ENCODE measurements at regions of chr4 and their contacts with region 1.

Region 1: DNA sequence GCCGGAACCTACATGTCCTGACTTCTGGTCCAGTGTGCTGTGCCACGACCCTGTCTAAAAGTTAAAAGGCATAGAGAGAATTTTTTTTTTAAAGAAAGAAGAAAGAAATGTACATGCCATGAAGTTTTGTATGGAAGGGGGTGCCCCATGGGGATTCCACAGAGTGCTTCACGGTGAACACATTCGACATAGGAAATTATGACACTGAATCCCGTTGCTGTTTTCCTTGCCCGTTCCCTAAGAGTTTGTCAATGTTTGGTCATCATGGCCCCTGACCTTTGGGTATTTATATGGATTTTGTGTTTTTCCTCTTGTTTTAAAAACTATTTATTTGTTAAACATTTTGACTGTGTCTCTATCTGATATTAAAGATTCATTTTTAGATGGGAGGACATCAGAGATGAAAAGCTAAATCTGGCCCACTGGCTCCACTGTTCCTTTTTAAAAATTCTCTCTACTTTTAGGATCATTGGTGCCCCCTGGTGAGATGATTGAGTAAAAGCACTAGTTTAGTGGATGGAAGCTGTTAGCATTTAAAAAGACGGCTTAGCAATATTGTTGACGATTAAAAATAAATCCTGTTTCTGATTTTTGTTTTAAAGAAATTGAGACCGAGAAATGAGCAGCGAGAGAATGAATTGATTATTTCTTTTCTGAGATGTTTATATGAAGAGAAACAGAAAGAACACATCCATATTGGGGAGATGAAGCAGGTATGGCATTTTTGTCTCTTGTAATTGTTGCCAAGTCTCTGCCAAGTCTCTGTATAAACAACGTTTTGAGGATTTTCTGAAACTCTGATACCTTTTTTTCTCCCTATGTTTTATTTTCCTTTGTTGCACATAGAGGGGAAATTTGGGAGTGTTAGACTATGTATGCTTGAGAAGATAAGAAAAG is 75.0 kb downstream of the PTTG2 start:
- DNase-seq: peak; percentile 54
- ATAC-seq: no peak
- H3K4me3 Mint-ChIP-seq: no peak overlapping the region
- H3K27ac Mint-ChIP-seq: no peak overlapping the region
- H3K4me1 Mint-ChIP-seq: no peaks in the 10 kb centered on the region
- H3K27me3 Mint-ChIP-seq: no peaks in the 10 kb centered on the region

Region 2: DNA sequence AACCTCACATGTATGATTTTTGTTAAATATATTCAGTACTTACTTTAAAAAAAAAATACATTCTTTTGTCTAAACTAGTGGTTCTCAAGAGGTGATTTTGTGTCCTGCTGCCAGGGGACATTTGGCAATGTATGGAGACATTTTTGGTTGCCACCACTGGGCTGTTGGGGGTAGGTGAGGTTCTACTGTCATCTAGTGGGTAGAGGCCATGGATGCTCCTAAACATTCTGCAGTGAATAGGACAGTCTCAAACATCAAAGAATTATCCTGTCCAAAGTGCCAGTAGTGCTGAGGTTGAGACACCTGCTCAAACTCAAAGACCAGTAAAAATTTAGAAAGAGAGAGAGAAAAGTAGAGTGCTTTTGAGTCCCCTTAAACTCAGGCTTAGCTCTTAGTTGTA is 241.7 kb before region 1 on chr4:
- CTCF ChIA-PET with region 1: interaction called, 11 read pairs
- POLR2A ChIA-PET with region 1: no interaction called
- DNase-seq: peak; percentile 31
- ATAC-seq: no peak
- H3K4me3 Mint-ChIP-seq: no peak overlapping the region
- H3K27ac Mint-ChIP-seq: no peak overlapping the region
- H3K4me1 Mint-ChIP-seq: no peaks in the 10 kb centered on the region
- H3K27me3 Mint-ChIP-seq: peaks cover 10% of the 10 kb centered on the region

Region 3: DNA sequence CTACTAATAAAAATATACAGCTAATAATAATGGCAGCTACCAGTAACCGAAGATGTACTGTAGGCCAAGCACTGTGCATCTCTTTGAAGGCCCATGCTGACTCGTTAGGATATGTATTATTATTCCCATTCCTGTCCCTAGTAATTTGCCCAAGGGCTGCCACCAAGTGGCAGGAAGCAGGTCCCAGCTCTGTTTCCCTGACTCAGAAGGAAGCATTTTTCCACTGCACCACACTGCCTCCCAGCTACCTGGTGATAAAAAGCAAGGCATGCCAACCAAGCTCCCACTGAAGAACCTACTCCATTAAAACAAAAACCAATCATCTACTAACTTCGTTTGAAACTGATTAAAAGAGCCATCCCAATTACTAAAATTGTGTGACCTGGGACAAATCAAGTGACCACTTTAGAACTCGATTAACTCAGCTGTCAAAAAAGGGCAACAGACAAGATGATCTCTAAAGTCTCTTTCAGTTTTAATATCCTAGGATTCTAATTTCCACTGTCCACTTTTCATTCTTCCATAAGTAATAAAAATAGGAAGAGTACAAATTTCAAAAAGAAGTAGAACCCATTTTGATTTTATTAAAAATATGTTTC is 233.1 kb before region 1 on chr4:
- CTCF ChIA-PET with region 1: interaction called, 26 read pairs
- POLR2A ChIA-PET with region 1: no interaction called
- DNase-seq: no peak
- ATAC-seq: no peak
- H3K4me3 Mint-ChIP-seq: no peak overlapping the region
- H3K27ac Mint-ChIP-seq: no peak overlapping the region
- H3K4me1 Mint-ChIP-seq: no peaks in the 10 kb centered on the region
- H3K27me3 Mint-ChIP-seq: peaks cover 5% of the 10 kb centered on the region

Region 4: DNA sequence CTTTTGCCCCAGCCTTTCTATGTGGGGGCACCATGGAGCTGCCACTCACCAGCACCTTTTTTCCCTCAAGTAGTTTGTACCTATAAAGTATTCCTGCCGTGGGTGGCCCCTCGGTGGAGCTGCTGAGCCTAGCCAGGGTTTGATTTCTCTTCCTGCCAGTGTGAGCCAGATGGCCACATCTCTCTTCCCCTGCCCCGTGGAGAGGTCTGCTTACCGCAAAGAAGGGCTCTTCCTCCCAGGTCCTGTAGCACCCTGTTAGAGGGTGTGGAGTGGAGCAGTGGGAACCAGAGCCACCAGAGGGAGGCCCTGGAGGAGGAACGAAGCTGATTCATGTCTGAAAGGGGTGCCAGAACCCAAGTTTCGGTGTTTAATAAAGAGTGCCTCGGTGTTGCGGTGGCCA is 20.3 kb after region 1 on chr4:
- CTCF ChIA-PET with region 1: no interaction called
- POLR2A ChIA-PET with region 1: no interaction called
- DNase-seq: no peak
- ATAC-seq: no peak
- H3K4me3 Mint-ChIP-seq: no peak overlapping the region
- H3K27ac Mint-ChIP-seq: no peak overlapping the region
- H3K4me1 Mint-ChIP-seq: no peaks in the 10 kb centered on the region
- H3K27me3 Mint-ChIP-seq: no peaks in the 10 kb centered on the region

Region 5: GRCh38 chr4:38119668-38120385 is 84.6 kb after region 1 on chr4:
- CTCF ChIA-PET with region 1: no interaction called
- POLR2A ChIA-PET with region 1: no interaction called
- DNase-seq: no peak
- ATAC-seq: no peak
- H3K4me3 Mint-ChIP-seq: no peak overlapping the region
- H3K27ac Mint-ChIP-seq: no peak overlapping the region
- H3K4me1 Mint-ChIP-seq: peaks cover 13% of the 10 kb centered on the region
- H3K27me3 Mint-ChIP-seq: no peaks in the 10 kb centered on the region

Measured in activated CD8-positive, alpha-beta T cell treated with anti-CD3 and anti-CD28 coated beads, Interleukin-2, amount 10 ng/mL, durations not matched to agents 7 days and 5 days (primary cell).